Right ventricle myocardium inferior (tissue), 1 donor: ENCODE measurements at regions of chr14 and their contacts with region 1.

Region 1: GRCh38 chr14:32408018-32408417 is 78.9 kb downstream of the AKAP6 start:
- DNase-seq: no peak
- ATAC-seq: no peak

Region 2: GRCh38 chr14:32457213-32457920 is 49.3 kb after region 1 on chr14:
- intact Hi-C with region 1: loop called (anchors 5 kb)
- DNase-seq: peak; percentile 74
- ATAC-seq: peak; percentile 98

Region 3: DNA sequence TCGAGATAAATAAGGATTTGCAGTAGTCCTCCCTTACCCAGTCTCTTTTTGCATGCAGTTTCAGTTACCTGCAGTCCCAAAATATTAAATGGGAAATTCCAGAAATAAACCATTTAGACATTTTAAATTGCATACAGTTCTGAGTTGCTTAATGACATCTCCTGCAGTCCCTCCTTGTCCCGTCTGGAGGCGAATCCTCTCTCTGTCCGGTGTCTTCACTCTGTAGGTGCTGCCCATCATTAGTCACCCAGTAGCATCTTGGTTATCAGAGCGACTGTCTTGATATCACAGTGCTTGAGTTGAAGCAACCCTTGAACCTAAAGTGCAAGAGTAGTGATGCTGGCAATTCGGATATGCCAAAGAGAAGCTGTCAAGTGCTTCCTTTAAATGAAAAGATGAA is 430.7 kb after region 1 on chr14:
- intact Hi-C with region 1: no loop called
- DNase-seq: no peak
- ATAC-seq: no peak